HCT116 (cell line): ENCODE measurements at regions of chr12 and their contacts with region 1.

Region 1: GRCh38 chr12:75658901-75659383 is 147.5 kb upstream of the KRR1 start:
- DNase-seq: peak; percentile 85
- ATAC-seq: peak; percentile 48
- H3K4me3 ChIP-seq: no peak overlapping the region
- H3K27ac ChIP-seq: peak overlapping the region; percentile 99
- H3K4me1 ChIP-seq: peaks cover 78 to 99% of the 10 kb centered on the region in 2 experiments
- H3K27me3 ChIP-seq: no peaks in the 10 kb centered on the region
- CTCF ChIP-seq: no peak
- POLR2A ChIP-seq: no peak
- RAD21 ChIP-seq: 0 out of 2 replicates have a peak, but pooled peaks have one; percentile 16

Region 2: GRCh38 chr12:75623631-75624118 is 35.3 kb before region 1 on chr12:
- CTCF ChIA-PET with region 1: no interaction called
- POLR2A ChIA-PET with region 1: interaction called, 38 read pairs
- RAD21 ChIA-PET with region 1: no interaction called
- intact Hi-C with region 1: no loop called
- DNase-seq: peak; percentile 89
- ATAC-seq: peak; percentile 92
- H3K4me3 ChIP-seq: no peak overlapping the region
- H3K27ac ChIP-seq: peak overlapping the region; percentile 99
- H3K4me1 ChIP-seq: peaks cover 39 to 70% of the 10 kb centered on the region in 2 experiments
- H3K27me3 ChIP-seq: no peaks in the 10 kb centered on the region
- CTCF ChIP-seq: peak; percentile 49 to 64 (median 51); a peak in 5 of 6 replicates
- POLR2A ChIP-seq: peak; percentile 26
- RAD21 ChIP-seq: peak; percentile 81

Region 3: DNA sequence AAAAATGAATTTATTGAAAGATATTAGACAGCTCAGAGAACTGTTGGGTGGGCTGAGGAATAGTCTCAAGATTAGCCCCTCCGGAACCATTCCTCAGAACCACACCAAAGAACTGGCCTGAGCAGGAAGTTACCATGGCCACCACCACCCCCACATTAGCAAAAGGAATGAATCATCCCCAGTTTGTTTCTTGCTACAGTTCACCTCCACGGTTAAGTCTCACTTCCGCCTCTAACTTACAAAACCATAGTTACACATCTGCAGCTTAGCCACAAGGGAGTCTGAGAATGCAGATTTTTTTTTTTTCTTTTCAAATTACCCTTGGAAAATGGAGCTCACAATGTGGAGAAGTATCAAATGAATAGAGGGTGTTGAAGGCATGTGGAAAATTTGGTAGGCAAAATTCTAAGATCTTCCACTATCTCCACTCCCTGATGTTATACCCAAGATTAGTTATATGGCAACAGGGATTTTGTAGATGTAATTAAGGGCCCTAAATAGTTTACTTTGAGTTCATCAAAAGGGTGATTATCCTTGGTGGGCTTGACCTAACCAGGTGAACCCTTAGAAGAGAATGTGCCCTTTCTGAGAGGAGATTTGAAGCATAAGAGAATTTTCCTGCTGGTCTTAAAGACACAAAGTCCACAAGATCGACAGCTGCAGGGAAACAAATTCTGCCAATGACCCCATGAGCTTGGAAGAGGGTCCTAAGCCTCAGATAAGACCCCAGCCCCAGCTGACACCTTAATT is 17.7 kb before region 1 on chr12:
- CTCF ChIA-PET with region 1: no interaction called
- POLR2A ChIA-PET with region 1: interaction called, 271 read pairs
- RAD21 ChIA-PET with region 1: interaction called in 1 of 2 experiments, 6 read pairs
- intact Hi-C with region 1: loop called (anchors 1 kb)
- DNase-seq: peak; percentile 93
- ATAC-seq: peak; percentile 68
- H3K4me3 ChIP-seq: peak overlapping the region in 1 of 2 experiments; percentile 9; a peak in 1 of 4 replicates
- H3K27ac ChIP-seq: peak overlapping the region; percentile 99
- H3K4me1 ChIP-seq: peaks cover 91 to 100% of the 10 kb centered on the region in 2 experiments
- H3K27me3 ChIP-seq: no peaks in the 10 kb centered on the region
- CTCF ChIP-seq: no peak
- POLR2A ChIP-seq: no peak
- RAD21 ChIP-seq: peak; percentile 36

Region 4: DNA sequence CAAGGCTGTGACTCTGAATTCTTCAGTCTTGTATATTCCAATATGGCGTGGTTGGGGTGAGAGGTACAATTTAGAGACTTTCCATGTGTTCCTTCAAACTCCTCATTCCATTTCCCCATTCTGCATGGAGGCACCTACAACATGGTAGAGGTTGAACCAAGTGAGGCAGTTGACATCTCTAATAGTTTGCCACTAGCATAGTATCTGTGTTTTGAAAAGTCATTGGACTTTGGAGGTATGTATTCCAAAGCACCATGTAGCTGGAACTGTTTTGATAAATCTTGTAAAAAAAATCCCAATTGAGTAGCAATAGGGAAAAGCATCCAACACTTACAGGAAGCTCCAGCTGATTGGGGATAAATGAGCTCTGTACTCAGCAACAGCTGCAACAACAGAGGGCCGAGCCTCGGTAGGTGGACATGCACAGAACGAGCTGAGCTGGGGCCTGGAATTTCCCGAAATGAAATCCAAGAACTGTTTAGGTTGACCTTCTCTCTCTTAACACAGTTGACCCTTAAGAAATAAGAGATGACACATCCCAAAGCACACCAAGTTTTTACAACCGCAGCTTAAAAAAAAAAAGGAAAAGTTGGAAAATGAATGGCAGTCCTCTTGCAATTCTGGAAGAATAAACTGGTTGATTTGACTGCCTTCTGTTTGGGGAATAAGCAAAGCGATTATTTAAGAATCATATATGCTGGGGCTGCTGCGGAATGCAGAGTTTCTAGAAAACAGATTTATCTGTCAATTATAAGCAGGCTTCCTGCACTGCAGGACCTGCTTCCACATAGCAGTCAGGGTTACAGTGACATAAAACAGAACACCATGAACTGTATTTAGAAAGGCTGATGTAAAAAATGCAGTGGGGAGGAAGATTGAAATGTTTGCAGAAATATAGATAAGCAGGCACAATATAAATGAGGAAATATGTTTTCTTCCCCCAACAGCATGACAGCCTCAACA is 47.1 kb after region 1 on chr12:
- CTCF ChIA-PET with region 1: no interaction called
- POLR2A ChIA-PET with region 1: interaction called, 42 read pairs
- RAD21 ChIA-PET with region 1: interaction called, 3 to 5 read pairs
- intact Hi-C with region 1: loop called (anchors 2 kb)
- DNase-seq: peak; percentile 64
- ATAC-seq: peak; percentile 52
- H3K4me3 ChIP-seq: peak overlapping the region in 1 of 2 experiments; percentile 19; a peak in 1 of 4 replicates
- H3K27ac ChIP-seq: peak overlapping the region; percentile 100
- H3K4me1 ChIP-seq: peaks cover 88 to 100% of the 10 kb centered on the region in 2 experiments
- H3K27me3 ChIP-seq: no peaks in the 10 kb centered on the region
- CTCF ChIP-seq: no peak
- POLR2A ChIP-seq: no peak
- RAD21 ChIP-seq: 0 out of 2 replicates have a peak, but pooled peaks have one; percentile 2

Region 5: GRCh38 chr12:75722714-75723200 is 63.8 kb after region 1 on chr12:
- CTCF ChIA-PET with region 1: no interaction called
- POLR2A ChIA-PET with region 1: interaction called, 89 read pairs
- RAD21 ChIA-PET with region 1: no interaction called
- intact Hi-C with region 1: loop called (anchors 1 kb)
- DNase-seq: peak; percentile 77
- ATAC-seq: no peak
- H3K4me3 ChIP-seq: no peak overlapping the region
- H3K27ac ChIP-seq: peak overlapping the region; percentile 100
- H3K4me1 ChIP-seq: peaks cover 87 to 96% of the 10 kb centered on the region in 2 experiments
- H3K27me3 ChIP-seq: no peaks in the 10 kb centered on the region
- CTCF ChIP-seq: no peak
- POLR2A ChIP-seq: no peak
- RAD21 ChIP-seq: no peak

Region 6: GRCh38 chr12:75954041-75954440 is 295.1 kb after region 1 on chr12:
- CTCF ChIA-PET with region 1: no interaction called
- POLR2A ChIA-PET with region 1: no interaction called
- RAD21 ChIA-PET with region 1: no interaction called
- intact Hi-C with region 1: loop called (anchors 10 kb)
- DNase-seq: peak; percentile 87
- ATAC-seq: peak; percentile 67
- H3K4me3 ChIP-seq: 0 out of 4 replicates have a peak overlapping the region, but pooled peaks of 1 of the 2 experiments have one; percentile 2
- H3K27ac ChIP-seq: peak overlapping the region; percentile 100
- H3K4me1 ChIP-seq: peaks cover 61 to 88% of the 10 kb centered on the region in 2 experiments
- H3K27me3 ChIP-seq: no peaks in the 10 kb centered on the region
- CTCF ChIP-seq: no peak
- POLR2A ChIP-seq: no peak
- RAD21 ChIP-seq: no peak

Region 7: DNA sequence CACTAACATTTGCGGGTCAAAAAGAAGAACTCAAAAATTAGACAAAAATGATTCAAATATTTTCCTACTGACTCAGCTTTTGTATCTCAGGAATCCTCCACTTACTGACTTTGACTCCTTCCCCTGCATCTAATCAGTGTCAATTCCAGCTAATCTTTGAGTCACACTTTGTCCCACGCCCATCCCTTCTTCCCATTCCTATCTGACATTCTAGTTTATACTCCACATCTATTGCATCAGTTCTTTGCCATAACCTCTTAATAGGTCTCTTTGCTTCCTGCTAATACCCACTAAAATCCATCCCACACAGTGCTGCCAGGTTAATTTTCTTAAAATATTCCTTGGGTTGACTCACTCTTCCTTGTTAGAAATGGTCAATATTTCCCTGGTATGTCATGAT is 670.2 kb after region 1 on chr12:
- CTCF ChIA-PET with region 1: no interaction called
- POLR2A ChIA-PET with region 1: interaction called, 4 read pairs
- RAD21 ChIA-PET with region 1: no interaction called
- intact Hi-C with region 1: loop called (anchors 2 kb)
- DNase-seq: peak; percentile 86
- ATAC-seq: peak; percentile 79
- H3K4me3 ChIP-seq: no peak overlapping the region
- H3K27ac ChIP-seq: peak overlapping the region; percentile 87
- H3K4me1 ChIP-seq: peaks cover 17 to 43% of the 10 kb centered on the region in 2 experiments
- H3K27me3 ChIP-seq: no peaks in the 10 kb centered on the region
- CTCF ChIP-seq: no peak
- POLR2A ChIP-seq: no peak
- RAD21 ChIP-seq: peak; percentile 36